Lower leg skin (tissue), 4 donors: ENCODE measurements at regions of chr15 and their contacts with region 1.

Region 1: DNA sequence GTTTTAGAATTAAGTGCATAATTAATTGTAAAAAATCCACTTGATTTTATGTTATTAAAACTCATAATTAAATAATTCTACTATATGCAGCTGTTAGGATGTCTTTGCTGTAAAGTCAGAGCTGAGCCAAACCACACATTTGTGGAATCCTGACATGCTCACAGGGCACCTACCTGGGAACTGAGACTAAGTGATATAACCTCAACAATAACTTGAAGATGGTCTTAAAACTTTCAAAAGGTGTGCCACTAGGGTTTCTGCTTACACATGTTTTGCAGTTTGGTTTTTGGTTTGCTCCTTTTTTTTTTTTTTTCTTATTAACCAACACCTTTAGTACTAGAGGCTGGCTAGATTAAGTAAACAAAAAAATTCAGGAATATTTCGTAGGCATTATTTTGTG is 549.8 kb downstream of the UNC13C start:
- DNase-seq: no peak
- H3K4me3 ChIP-seq: no peak overlapping the region
- CTCF ChIP-seq: no peak
- POLR2A ChIP-seq: no peak

Region 2: GRCh38 chr15:53404930-53405493 is 1123.0 kb before region 1 on chr15:
- intact Hi-C with region 1: loop called (anchors 5 kb)
- DNase-seq: no peak
- H3K4me3 ChIP-seq: no peak overlapping the region
- CTCF ChIP-seq: no peak
- POLR2A ChIP-seq: no peak

Region 3: GRCh38 chr15:55267401-55268175 is 739.6 kb after region 1 on chr15:
- intact Hi-C with region 1: no loop called
- DNase-seq: peak in 1 of 2 donors; percentile 27
- H3K4me3 ChIP-seq: no peak overlapping the region
- CTCF ChIP-seq: no peak
- POLR2A ChIP-seq: no peak